ENCODE measurements at regions of chr2 and their contacts with region 1.

Region 1: GRCh38 chr2:216698895-216699294 is 3.5 kb upstream of the IGFBP5 start:
- H3K4me3 ChIP-seq: no peak overlapping the region
- H3K27ac ChIP-seq: peak overlapping the region; percentile 57; the same call in 1 of the 2 replicates
- H3K4me1 ChIP-seq: peaks cover 44% of the 10 kb centered on the region
- CTCF ChIP-seq: peak; percentile 85

Region 2: GRCh38 chr2:216491793-216492596 is 206.9 kb before region 1 on chr2:
- CTCF ChIA-PET with region 1: no interaction called
- POLR2A ChIA-PET with region 1: no interaction called
- H3K4me3 ChIP-seq: no peak overlapping the region
- H3K27ac ChIP-seq: no peak overlapping the region
- H3K4me1 ChIP-seq: peaks cover 3% of the 10 kb centered on the region; the same call in 1 of the 2 replicates
- CTCF ChIP-seq: no peak

Region 3: GRCh38 chr2:216680951-216681629 is 17.8 kb before region 1 on chr2:
- CTCF ChIA-PET with region 1: interaction called, 16 read pairs
- POLR2A ChIA-PET with region 1: interaction called, 5 read pairs
- H3K4me3 ChIP-seq: no peak overlapping the region
- H3K27ac ChIP-seq: no peak overlapping the region
- H3K4me1 ChIP-seq: peaks cover 5% of the 10 kb centered on the region
- CTCF ChIP-seq: no peak

Region 4: GRCh38 chr2:216752855-216753505 is 54.1 kb after region 1 on chr2:
- CTCF ChIA-PET with region 1: interaction called, 16 read pairs
- POLR2A ChIA-PET with region 1: no interaction called
- H3K4me3 ChIP-seq: no peak overlapping the region
- H3K27ac ChIP-seq: peak overlapping the region; percentile 28; the same call in 1 of the 2 replicates
- H3K4me1 ChIP-seq: peaks cover 6% of the 10 kb centered on the region
- CTCF ChIP-seq: no peak

Region 5: GRCh38 chr2:217166241-217166850 is 467.5 kb after region 1 on chr2:
- CTCF ChIA-PET with region 1: interaction called, 11 read pairs
- POLR2A ChIA-PET with region 1: no interaction called
- H3K4me3 ChIP-seq: no peak overlapping the region
- H3K27ac ChIP-seq: no peak overlapping the region
- H3K4me1 ChIP-seq: peaks cover 9% of the 10 kb centered on the region
- CTCF ChIP-seq: peak; percentile 9; the same call in 1 of the 2 replicates

Measured in HEK293 (cell line).